Activated naive CD4-positive, alpha-beta T cell treated with anti-CD3 and anti-CD28 coated beads for 36 hours (primary cell): ENCODE measurements at regions of chr4 and their contacts with region 1.

Region 1: GRCh38 chr4:108172753-108173598 is 4.2 kb upstream of the LEF1 start:
- DNase-seq: peak; percentile 79
- H3K4me3 Mint-ChIP-seq: peak overlapping the region; percentile 91
- H3K27ac Mint-ChIP-seq: peak overlapping the region; percentile 92
- H3K4me1 Mint-ChIP-seq: peaks cover 50% of the 10 kb centered on the region
- H3K27me3 Mint-ChIP-seq: no peaks in the 10 kb centered on the region

Region 2: DNA sequence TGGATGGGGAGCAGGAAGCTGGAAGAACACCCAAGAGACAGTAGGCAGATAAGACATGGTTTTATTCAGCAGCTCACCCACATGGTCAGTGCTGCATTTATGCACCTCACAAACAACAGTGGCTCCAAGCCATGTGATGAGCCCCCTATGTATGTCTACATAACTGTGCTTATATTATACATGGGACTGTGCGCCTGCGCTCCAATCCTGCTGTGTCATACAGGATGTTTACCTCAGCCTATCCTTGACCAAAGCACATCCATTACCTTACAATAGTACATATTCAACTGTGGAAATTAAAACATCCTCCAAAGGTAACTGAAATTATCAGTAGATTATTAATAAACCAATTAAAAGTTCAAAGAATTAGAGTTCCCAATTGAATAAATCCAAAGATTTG is 392.3 kb before region 1 on chr4:
- CTCF ChIA-PET with region 1: no interaction called
- intact Hi-C with region 1: no loop called
- DNase-seq: peak; percentile 34
- H3K4me3 Mint-ChIP-seq: no peak overlapping the region
- H3K27ac Mint-ChIP-seq: no peak overlapping the region
- H3K4me1 Mint-ChIP-seq: no peaks in the 10 kb centered on the region
- H3K27me3 Mint-ChIP-seq: peaks cover 18% of the 10 kb centered on the region

Region 3: GRCh38 chr4:108045694-108046038 is 127.3 kb before region 1 on chr4:
- CTCF ChIA-PET with region 1: no interaction called
- intact Hi-C with region 1: loop called (anchors 1 kb)
- DNase-seq: peak; percentile 67
- H3K4me3 Mint-ChIP-seq: no peak overlapping the region
- H3K27ac Mint-ChIP-seq: peak overlapping the region; percentile 89
- H3K4me1 Mint-ChIP-seq: peaks cover 68% of the 10 kb centered on the region
- H3K27me3 Mint-ChIP-seq: no peaks in the 10 kb centered on the region

Region 4: GRCh38 chr4:108425988-108426387 is 253.0 kb after region 1 on chr4:
- CTCF ChIA-PET with region 1: no interaction called
- intact Hi-C with region 1: loop called (anchors 1 kb)
- DNase-seq: no peak
- H3K4me3 Mint-ChIP-seq: no peak overlapping the region
- H3K27ac Mint-ChIP-seq: peak overlapping the region; percentile 48
- H3K4me1 Mint-ChIP-seq: peaks cover 21% of the 10 kb centered on the region
- H3K27me3 Mint-ChIP-seq: no peaks in the 10 kb centered on the region

Region 5: GRCh38 chr4:108466936-108467902 is 294.2 kb after region 1 on chr4:
- CTCF ChIA-PET with region 1: no interaction called
- intact Hi-C with region 1: loop called (anchors 2 kb)
- DNase-seq: peak; percentile 48
- H3K4me3 Mint-ChIP-seq: peak overlapping the region; percentile 65
- H3K27ac Mint-ChIP-seq: peak overlapping the region; percentile 88
- H3K4me1 Mint-ChIP-seq: peaks cover 40% of the 10 kb centered on the region
- H3K27me3 Mint-ChIP-seq: no peaks in the 10 kb centered on the region

Region 6: DNA sequence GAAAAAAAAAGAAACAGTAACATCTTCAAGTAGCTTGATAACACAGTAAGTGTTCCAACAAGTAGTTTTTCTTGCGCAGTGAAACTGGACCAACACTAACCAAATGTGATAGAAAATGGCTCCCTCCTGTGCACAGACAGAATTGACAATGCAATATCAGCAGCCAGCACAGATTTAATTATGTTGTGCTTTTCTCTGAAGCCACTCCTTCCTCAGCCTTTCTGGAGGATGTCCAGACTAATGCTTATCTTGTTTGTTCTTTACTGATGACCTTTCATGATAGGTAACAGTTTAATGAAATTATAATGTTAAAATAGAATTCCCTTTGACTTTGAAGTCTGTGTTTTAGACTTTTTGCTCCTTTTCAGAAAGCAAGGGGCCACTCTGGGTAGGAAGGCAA is 300.2 kb after region 1 on chr4:
- CTCF ChIA-PET with region 1: no interaction called
- intact Hi-C with region 1: loop called (anchors 1 kb)
- DNase-seq: peak; percentile 48
- H3K4me3 Mint-ChIP-seq: no peak overlapping the region
- H3K27ac Mint-ChIP-seq: no peak overlapping the region
- H3K4me1 Mint-ChIP-seq: peaks cover 27% of the 10 kb centered on the region
- H3K27me3 Mint-ChIP-seq: no peaks in the 10 kb centered on the region